ENCODE measurements at regions of chr16 and their contacts with region 1.

Region 1: DNA sequence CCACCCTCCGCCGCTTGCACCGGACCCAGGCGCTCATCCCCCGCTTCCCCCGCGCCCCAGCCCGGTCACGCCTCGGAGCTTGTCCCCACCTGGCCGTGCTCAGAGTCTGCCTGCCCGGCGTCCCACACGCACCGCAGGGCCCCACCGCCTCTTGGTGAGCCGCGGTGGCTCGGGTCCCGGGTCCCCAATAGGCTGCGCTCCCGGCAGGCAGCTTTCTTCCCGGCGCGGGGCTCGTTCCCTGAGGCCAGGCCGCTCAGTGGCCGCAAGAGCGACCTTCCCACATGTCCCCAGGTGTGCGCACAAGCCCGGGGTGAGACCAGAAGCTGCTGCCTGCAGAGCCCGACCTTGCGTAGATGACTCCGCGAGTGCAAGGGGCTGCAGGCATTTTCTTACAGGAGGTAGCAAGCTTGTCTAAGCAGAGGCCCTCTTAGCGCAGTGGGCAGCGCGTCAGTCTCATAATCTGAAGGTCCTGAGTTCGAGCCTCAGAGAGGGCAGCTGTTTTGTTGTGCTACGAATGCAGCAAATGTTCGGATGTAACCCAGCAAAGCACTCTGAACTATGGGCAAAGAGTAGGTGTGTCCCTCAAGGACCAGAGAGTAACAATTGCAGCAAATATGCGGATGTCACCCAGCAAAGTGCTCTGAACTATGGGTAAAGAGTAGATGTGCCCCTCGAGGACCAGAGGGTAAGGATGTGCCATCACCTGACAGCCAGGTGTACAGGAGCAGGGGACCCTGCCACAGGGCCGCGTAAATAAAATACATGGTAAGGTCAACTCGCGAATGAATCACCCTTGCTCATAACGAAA is 15.6 kb downstream of the TLE7 start:
- DNase-seq: peak; percentile 99
- ATAC-seq: peak; percentile 93
- H3K4me3 ChIP-seq: peak overlapping the region; percentile 57 to 80 (median 59)
- H3K27ac ChIP-seq: peak overlapping the region; percentile 41
- H3K4me1 ChIP-seq: peaks cover 30% of the 10 kb centered on the region
- H3K27me3 ChIP-seq: peaks cover 4 to 32% of the 10 kb centered on the region in 2 experiments
- CTCF ChIP-seq: peak; percentile 44
- EP300 ChIP-seq: peak; percentile 9 to 43; a peak in 1 of 4 replicates
- POLR2A ChIP-seq: no peak
- RAD21 ChIP-seq: no peak; the same call in 1 of the 2 replicates

Region 2: DNA sequence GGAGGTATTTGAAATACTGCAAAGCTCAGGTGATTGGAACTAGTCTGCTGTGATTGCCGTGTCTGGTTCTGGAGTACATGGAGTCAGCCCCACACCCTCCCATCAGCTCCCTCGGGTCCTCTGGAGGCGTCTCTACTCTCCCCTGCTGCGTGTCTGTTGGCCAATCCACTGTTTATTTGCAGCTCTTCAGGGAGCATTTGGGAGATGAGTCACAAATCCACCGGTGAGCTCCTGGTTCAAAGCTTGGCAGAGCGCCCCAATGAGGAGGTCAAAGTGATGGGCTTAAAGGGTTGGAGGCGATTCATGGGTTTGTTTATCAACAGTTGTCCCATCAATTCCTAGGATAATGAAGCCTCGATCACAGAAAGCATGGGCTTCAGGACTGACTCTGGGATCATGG is 53.2 kb before region 1 on chr16:
- CTCF ChIA-PET with region 1: no interaction called
- POLR2A ChIA-PET with region 1: no interaction called
- in situ Hi-C with region 1: no loop called
- intact Hi-C with region 1: no loop called
- DNase-seq: no peak
- ATAC-seq: no peak
- H3K4me3 ChIP-seq: no peak overlapping the region
- H3K27ac ChIP-seq: no peak overlapping the region
- H3K4me1 ChIP-seq: no peaks in the 10 kb centered on the region
- H3K27me3 ChIP-seq: peaks cover 8 to 61% of the 10 kb centered on the region in 2 experiments
- CTCF ChIP-seq: no peak
- EP300 ChIP-seq: no peak
- POLR2A ChIP-seq: no peak
- RAD21 ChIP-seq: no peak

Region 3: GRCh38 chr16:71441348-71441781 is 15.1 kb after region 1 on chr16:
- CTCF ChIA-PET with region 1: interaction called, 4 read pairs
- POLR2A ChIA-PET with region 1: no interaction called
- in situ Hi-C with region 1: no loop called
- intact Hi-C with region 1: loop called (anchors 2 kb)
- DNase-seq: no peak
- ATAC-seq: peak; percentile 76
- H3K4me3 ChIP-seq: no peak overlapping the region
- H3K27ac ChIP-seq: no peak overlapping the region
- H3K4me1 ChIP-seq: peaks cover 8% of the 10 kb centered on the region
- H3K27me3 ChIP-seq: peaks cover 4 to 21% of the 10 kb centered on the region in 2 experiments
- CTCF ChIP-seq: peak; percentile 87
- EP300 ChIP-seq: no peak
- POLR2A ChIP-seq: no peak
- RAD21 ChIP-seq: peak; percentile 85

Region 4: DNA sequence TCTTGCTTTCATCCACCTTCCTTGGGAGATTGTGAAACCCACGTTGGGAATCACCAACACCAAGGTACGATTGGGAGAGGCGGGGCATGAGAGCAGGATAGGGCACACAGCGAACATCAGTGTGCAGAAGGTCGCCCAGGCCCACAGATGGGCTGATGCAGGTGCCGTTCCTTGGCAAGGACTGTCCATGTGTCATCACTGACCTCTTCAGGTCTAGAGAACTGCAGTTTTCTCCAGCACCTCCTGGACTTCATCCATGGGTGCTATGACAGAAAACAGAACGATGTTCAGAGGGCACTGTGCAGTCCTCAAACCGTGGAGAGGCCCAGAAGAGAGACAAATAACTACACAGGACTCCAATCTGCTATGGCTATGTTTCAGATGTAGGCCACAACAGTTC is 174.5 kb after region 1 on chr16:
- CTCF ChIA-PET with region 1: no interaction called
- POLR2A ChIA-PET with region 1: no interaction called
- in situ Hi-C with region 1: no loop called
- intact Hi-C with region 1: no loop called
- DNase-seq: peak; percentile 50
- ATAC-seq: peak; percentile 99
- H3K4me3 ChIP-seq: peak overlapping the region in 1 of 3 experiments; percentile 54; a peak in 2 of 6 replicates
- H3K27ac ChIP-seq: peak overlapping the region; percentile 16
- H3K4me1 ChIP-seq: peaks cover 59% of the 10 kb centered on the region
- H3K27me3 ChIP-seq: no peaks in the 10 kb centered on the region
- CTCF ChIP-seq: peak; percentile 83
- EP300 ChIP-seq: no peak
- POLR2A ChIP-seq: no peak
- RAD21 ChIP-seq: peak; percentile 36; the same call in 1 of the 2 replicates

Measured in HepG2 (cell line).